H1 (cell line): ENCODE measurements at regions of chr4 and their contacts with region 1.

Region 1: GRCh38 chr4:121514443-121514842 is 133.6 kb upstream of the QRFPR start:
- DNase-seq: peak; percentile 65 to 72
- H3K4me3 ChIP-seq: no peak overlapping the region
- H3K27ac ChIP-seq: no peak overlapping the region
- H3K4me1 ChIP-seq: peaks cover 0 to 4% (median 0%) of the 10 kb centered on the region in 4 experiments; a peak in 2 of 7 replicates
- H3K27me3 ChIP-seq: no peaks in the 10 kb centered on the region
- CTCF ChIP-seq: peak; percentile 8 to 78 (median 65)
- EP300 ChIP-seq: no peak
- POLR2A ChIP-seq: no peak
- RAD21 ChIP-seq: peak in 1 of 2 experiments; percentile 43; a peak in 3 of 4 replicates

Region 2: DNA sequence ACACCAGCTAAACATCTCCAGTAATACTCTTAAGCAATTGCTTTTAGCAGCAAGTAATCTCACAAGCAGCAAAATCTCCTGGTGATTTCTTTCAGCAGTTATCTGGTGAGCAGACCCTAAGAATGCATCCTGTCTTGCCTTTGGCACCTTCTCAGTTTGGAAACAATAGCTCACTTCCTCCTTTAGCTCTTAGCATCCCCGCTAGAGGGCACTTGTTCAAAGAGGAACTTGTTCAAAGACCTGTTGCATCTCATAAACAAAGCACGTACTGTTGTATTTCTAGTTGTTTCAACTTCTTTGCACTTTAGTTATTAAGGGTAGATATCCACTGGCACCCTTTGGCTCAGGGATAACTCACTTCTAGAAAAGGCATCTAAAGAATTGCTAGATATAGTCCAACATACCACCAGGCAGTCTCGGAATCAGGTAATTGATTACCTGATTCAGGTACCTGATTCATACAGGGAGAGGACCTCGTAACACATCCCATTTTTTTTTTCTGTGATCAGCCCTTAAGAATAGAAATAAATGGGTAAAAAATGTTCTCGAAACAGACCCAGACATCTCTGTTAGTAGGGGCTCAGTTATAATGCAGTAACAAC is 51.7 kb before region 1 on chr4:
- CTCF ChIA-PET with region 1: interaction called, 13 read pairs
- POLR2A ChIA-PET with region 1: no interaction called
- DNase-seq: no peak
- H3K4me3 ChIP-seq: no peak overlapping the region
- H3K27ac ChIP-seq: no peak overlapping the region
- H3K4me1 ChIP-seq: 0 out of 7 replicates have a peak, but pooled peaks cover 0 to 2% (median 0%) of the 10 kb centered on the region in 4 experiments
- H3K27me3 ChIP-seq: no peaks in the 10 kb centered on the region
- CTCF ChIP-seq: peak in 2 of 3 experiments; percentile 73 to 90; a peak in 3 of 4 replicates
- EP300 ChIP-seq: no peak
- POLR2A ChIP-seq: no peak
- RAD21 ChIP-seq: peak; percentile 63 to 66

Region 3: GRCh38 chr4:121484633-121485032 is 29.8 kb before region 1 on chr4:
- CTCF ChIA-PET with region 1: interaction called, 19 read pairs
- POLR2A ChIA-PET with region 1: no interaction called
- DNase-seq: no peak
- H3K4me3 ChIP-seq: no peak overlapping the region
- H3K27ac ChIP-seq: no peak overlapping the region
- H3K4me1 ChIP-seq: no peaks in the 10 kb centered on the region
- H3K27me3 ChIP-seq: no peaks in the 10 kb centered on the region
- CTCF ChIP-seq: peak; percentile 59 to 87 (median 82)
- EP300 ChIP-seq: no peak
- POLR2A ChIP-seq: no peak
- RAD21 ChIP-seq: peak; percentile 70 to 75

Region 4: DNA sequence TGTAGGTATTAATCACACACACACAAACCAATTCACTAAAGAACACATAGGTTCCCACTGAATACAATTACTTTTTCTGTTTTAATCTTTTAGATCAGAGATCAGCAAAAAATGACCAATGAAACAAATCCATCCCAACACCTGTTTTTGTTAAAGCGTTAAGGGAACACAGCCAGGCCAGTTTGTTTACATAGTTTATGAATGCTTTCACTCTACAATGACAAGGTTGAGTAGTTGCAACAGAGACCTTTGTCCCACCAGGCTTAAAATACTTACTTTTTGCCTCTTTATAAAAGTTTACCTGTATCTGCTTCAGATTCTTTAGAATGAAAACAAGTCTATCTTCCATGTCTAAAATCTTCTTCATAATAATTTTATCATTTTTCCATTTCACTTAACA is 13.6 kb before region 1 on chr4:
- CTCF ChIA-PET with region 1: interaction called, 10 read pairs
- POLR2A ChIA-PET with region 1: no interaction called
- DNase-seq: no peak
- H3K4me3 ChIP-seq: no peak overlapping the region
- H3K27ac ChIP-seq: no peak overlapping the region
- H3K4me1 ChIP-seq: peaks cover 0 to 3% (median 0%) of the 10 kb centered on the region in 4 experiments; a peak in 1 of 7 replicates
- H3K27me3 ChIP-seq: no peaks in the 10 kb centered on the region
- CTCF ChIP-seq: no peak
- EP300 ChIP-seq: no peak
- POLR2A ChIP-seq: no peak
- RAD21 ChIP-seq: no peak

Region 5: DNA sequence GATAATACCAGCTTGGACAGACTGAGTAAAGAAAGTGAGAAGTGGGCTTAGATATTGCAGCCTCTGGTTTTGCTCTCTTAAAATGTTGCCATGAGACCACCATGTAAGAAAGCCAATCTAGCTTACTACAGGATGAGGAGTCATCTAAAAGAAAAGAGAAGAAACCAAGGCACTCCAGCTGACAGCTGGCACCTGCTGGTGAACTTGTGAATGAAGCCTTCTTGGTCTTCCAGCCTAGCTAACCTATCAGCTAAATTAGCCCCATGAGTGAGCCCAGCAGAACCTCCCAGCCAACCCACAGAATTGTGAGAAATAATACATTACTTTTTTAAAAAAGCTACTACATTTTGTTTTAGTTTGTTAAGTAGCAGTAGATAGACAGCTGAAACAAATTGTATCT is 20.9 kb after region 1 on chr4:
- CTCF ChIA-PET with region 1: interaction called, 14 read pairs
- POLR2A ChIA-PET with region 1: no interaction called
- DNase-seq: no peak
- H3K4me3 ChIP-seq: no peak overlapping the region
- H3K27ac ChIP-seq: no peak overlapping the region
- H3K4me1 ChIP-seq: no peaks in the 10 kb centered on the region
- H3K27me3 ChIP-seq: no peaks in the 10 kb centered on the region
- CTCF ChIP-seq: peak in 2 of 3 experiments; percentile 5 to 15; a peak in 1 of 4 replicates
- EP300 ChIP-seq: no peak
- POLR2A ChIP-seq: no peak
- RAD21 ChIP-seq: peak in 1 of 2 experiments; percentile 22; a peak in 1 of 4 replicates